ENCODE measurements at regions of chr1 and their contacts with region 1.

Region 1: GRCh38 chr1:235504496-235505222 is 407 bp upstream of the B3GALNT2 start:
- DNase-seq: peak; percentile 98
- ATAC-seq: peak; percentile 86
- H3K4me3 ChIP-seq: peak overlapping the region; percentile 75 to 84
- H3K27ac ChIP-seq: peak overlapping the region; percentile 99
- H3K4me1 ChIP-seq: peaks cover 10 to 38% of the 10 kb centered on the region in 2 experiments; a peak in 3 of 4 replicates
- H3K27me3 ChIP-seq: no peaks in the 10 kb centered on the region
- CTCF ChIP-seq: peak; percentile 77 to 84 (median 77); a peak in 5 of 6 replicates
- POLR2A ChIP-seq: peak; percentile 52
- RAD21 ChIP-seq: peak; percentile 69

Region 2: GRCh38 chr1:235367000-235367908 is 137.4 kb before region 1 on chr1 and contains the start of gene TBCE:
- CTCF ChIA-PET with region 1: no interaction called
- POLR2A ChIA-PET with region 1: interaction called, 3 read pairs
- RAD21 ChIA-PET with region 1: no interaction called
- intact Hi-C with region 1: loop called (anchors 2 kb)
- DNase-seq: peak; percentile 97
- ATAC-seq: peak; percentile 98
- H3K4me3 ChIP-seq: peak within 1 kb of the TSS; percentile 84 to 87
- H3K27ac ChIP-seq: peak within 1 kb of the TSS; percentile 81
- H3K4me1 ChIP-seq: peaks cover 0 to 18% of the 10 kb centered on the region in 2 experiments; a peak in 3 of 4 replicates
- H3K27me3 ChIP-seq: no peaks in the 10 kb centered on the region
- CTCF ChIP-seq: no peak; a peak in 1 of 6 replicates
- POLR2A ChIP-seq: peak; percentile 94
- RAD21 ChIP-seq: no peak
- total RNA-seq, gene TBCE: 20.8 TPM

Region 3: DNA sequence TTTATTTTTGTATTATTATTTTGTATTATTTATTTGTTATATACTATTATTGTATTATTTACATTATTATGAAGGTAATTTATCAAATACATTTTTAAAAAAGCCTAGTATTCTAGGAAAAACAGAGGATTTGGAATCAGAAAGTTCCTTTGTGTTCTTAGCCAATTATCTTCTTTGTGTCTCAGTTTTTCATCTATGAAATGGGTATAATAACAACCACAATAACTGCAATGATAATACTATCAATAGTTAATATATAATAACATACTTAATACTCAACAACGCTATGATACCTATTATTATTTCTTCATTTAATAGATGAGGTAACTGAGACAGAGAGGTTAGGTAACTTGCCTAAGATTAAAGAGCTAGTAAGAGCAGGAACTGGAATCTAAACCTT is 225.3 kb after region 1 on chr1:
- CTCF ChIA-PET with region 1: interaction called, 10 read pairs
- POLR2A ChIA-PET with region 1: no interaction called
- RAD21 ChIA-PET with region 1: interaction called in 1 of 2 experiments, 6 read pairs
- intact Hi-C with region 1: no loop called
- DNase-seq: no peak
- ATAC-seq: no peak
- H3K4me3 ChIP-seq: no peak overlapping the region
- H3K27ac ChIP-seq: no peak overlapping the region
- H3K4me1 ChIP-seq: peaks cover 3 to 13% of the 10 kb centered on the region in 2 experiments
- H3K27me3 ChIP-seq: no peaks in the 10 kb centered on the region
- CTCF ChIP-seq: no peak
- POLR2A ChIP-seq: no peak
- RAD21 ChIP-seq: no peak